H1 (cell line): ENCODE measurements at regions of chr13 and their contacts with region 1.

Region 1: DNA sequence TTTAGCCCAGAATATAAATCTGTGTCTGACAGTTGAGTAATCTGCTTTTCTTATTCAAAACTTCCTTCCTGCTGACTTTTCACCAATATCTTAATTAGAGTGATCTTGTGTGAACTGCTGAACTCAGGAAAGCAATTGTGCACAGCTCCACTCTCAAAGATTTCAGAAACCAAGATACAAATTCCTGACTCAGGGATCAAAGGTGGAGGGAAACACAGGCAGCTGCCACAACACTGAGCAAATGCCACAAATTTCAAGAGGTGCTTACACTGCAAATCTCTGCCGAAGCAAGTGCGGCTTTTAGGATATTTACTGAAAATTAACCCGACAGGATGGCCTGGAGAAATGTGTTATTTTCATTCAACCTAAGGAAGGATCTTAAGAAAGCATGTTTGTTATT is 111.4 kb downstream of the STOML3 start:
- DNase-seq: no peak
- H3K4me3 ChIP-seq: no peak overlapping the region
- H3K27ac ChIP-seq: no peak overlapping the region
- H3K4me1 ChIP-seq: no peaks in the 10 kb centered on the region
- H3K27me3 ChIP-seq: no peaks in the 10 kb centered on the region
- CTCF ChIP-seq: no peak
- EP300 ChIP-seq: no peak
- POLR2A ChIP-seq: no peak
- RAD21 ChIP-seq: no peak

Region 2: DNA sequence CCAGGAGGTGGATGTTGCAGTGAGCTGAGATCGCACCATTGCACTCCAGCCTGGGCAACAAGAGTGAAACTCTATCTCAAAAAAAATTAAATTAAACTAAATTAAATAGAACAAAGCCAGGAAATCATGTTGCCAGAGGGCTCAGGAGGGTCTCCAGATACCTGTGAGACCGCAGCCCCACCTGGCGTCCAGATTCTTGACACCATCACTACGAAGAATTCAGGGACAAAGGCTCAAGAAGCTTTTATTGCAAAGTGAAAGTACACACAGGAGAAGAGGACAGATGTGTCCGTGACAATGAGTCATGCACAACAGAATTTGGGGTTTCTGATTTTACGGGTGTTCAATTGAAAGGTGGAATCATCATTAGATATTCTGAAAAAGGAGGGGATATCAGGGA is 34.8 kb after region 1 on chr13:
- CTCF ChIA-PET with region 1: interaction called, 22 read pairs
- POLR2A ChIA-PET with region 1: no interaction called
- DNase-seq: no peak
- H3K4me3 ChIP-seq: no peak overlapping the region
- H3K27ac ChIP-seq: no peak overlapping the region
- H3K4me1 ChIP-seq: no peaks in the 10 kb centered on the region
- H3K27me3 ChIP-seq: no peaks in the 10 kb centered on the region
- CTCF ChIP-seq: peak; percentile 5 to 21 (median 9); a peak in 3 of 4 replicates
- EP300 ChIP-seq: no peak
- POLR2A ChIP-seq: no peak
- RAD21 ChIP-seq: peak; percentile 41 to 56